Head of caudate nucleus (tissue), 42 donors: ENCODE measurements at regions of chr16 and their contacts with region 1.

Region 1: GRCh38 chr16:2429034-2429770 is at the start of gene CCNF:
- DNase-seq: peak; percentile 94 to 99 (median 98)

Region 2: GRCh38 chr16:2224183-2224486 is 205.1 kb before region 1 on chr16:
- intact Hi-C with region 1: no loop called
- DNase-seq: peak in 1 of 42 donors; percentile 42

Region 3: DNA sequence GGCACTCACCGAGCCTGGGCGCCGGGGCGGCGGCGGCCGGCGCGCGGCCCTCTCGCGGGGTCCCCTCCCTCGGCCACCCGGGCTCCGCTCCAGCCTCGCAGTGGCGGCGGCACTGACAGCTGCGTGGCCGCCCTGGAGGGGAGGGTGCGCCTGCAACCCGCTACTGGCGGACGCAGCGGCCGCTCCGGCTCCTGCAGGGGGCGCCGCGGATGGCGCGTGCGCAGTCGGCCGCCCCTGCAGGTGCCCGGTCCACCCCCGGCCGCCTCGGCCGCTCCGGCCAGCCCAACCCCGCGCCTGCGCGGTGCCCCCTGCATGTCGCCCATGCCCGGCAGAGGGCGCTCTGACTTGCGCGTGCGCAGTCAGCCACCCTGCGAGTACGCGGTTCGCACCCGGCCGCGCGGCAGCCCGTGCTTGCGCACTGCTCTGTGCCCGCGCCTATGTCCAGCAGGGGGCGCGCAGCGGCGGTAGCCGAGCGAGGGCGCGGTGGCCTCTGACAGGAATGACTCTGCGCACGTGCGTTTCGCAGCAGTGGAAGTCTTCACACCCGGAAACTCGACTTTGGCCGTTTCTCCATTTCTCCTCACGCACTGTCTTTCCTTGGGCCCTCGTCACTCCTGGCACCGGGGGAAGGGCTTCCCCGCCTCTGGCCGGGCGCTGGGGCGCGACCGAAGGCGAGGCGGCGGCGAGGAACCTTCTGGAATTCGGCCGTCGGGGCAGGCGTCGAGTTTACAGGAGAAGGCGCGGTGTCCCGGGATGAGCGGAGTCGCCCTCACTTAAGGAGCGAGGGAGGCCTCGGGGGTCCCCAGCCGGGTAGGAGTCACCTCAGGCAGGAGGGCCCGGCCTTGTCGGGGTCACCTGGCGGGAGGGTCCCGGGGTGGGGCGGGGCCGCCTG is 88.4 kb before region 1 on chr16 and contains the start of gene ABCA3:
- intact Hi-C with region 1: loop called (anchors 5 kb)
- DNase-seq: peak; percentile 77 to 98 (median 93)

Region 4: DNA sequence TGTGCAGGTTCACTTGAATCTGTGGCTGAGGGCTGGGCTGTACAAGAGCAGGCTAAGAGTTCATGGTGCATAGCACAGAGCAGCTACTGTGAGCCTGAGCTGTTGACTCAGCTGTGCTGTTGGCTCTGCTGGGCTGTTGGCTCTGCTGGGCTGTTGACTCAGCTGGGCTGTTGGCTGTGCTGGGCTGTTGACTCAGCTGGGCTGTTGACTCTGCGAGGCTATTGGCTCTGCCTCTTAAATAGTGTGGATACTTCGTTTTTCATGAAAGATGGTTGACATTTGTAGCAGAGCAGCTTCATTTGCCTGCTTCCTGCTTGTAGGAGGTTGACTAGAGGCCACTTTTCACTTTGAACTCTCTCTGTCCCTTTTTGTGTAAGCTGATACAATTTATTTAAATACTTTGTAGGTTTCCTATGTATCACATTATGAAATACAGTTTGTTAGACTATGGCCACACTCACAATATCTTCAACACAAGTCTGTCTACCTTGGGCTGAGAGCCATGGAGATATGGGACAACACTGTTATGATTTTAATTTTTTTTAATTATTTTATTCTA is 40.2 kb before region 1 on chr16:
- intact Hi-C with region 1: no loop called
- DNase-seq: no peak

Region 5: DNA sequence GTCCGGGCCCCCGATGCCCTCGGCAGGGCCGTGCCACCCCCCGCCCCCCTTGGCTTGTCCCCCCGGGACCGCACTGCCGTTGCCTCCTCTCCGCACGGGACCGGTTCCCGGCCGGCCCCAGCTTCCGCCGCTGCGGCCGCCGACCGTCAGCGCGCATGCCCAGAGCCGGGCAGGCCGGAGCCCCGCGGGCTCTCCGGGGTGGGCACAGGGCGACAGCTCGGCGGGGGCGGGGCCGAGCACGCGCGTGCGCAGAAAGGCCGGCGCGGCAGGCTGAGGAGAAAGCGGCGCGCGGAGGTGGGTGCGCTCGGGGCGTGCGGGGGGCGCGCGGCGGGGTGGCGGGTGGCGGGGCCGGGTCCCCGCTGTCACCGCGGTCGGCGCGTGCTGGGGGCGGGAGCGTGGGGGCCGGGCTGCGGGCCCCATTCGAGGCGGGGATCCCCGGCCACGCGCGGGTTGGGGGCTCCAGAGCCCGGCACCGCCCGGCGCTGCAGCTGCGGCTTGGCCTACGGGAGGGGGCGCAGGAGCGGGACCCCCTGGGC is 45.7 kb after region 1 on chr16 and contains the start of gene TBC1D24:
- intact Hi-C with region 1: loop called (anchors 10 kb)
- DNase-seq: peak; percentile 46 to 94 (median 88)

Region 6: DNA sequence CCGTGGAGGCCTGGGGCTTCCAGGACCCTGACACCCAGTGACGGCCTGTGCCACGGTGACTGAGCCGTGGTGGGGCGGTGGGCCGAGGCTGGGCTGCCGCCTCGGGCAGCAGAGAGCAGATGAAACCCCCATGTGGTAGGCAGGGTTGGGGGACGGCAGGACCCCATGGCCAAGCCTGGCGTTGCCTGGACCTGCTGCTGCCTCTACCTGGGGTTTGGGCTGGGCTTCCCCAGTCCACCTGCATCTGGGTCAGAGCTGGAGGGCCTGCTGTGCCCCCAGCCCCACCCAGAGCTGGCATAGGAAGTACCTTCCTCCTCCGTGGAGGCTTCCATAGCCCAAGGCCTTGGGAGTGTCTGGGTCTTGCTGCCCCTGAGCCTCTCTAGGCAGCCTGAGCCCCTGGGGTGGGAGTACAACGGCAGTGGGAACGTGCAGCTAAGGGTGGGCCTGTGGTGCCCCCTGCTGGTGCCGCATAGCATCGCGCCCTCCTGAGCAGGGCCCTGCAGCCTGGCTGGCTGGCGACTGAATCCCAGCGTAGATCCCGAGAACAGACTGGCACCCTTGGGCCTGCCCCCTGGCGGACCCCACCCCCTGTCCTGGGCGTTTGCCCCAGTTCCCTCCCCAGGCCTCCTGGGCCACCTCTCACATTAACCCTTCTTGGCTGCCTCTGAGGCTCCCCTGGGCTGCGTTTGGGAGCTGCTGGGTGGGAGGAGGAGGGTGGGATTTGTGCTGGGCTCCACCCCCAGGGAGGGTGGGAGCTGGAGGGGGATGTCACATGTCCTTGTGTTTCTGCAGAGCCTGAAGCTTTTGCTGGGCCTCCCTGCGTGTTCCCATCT is 71.9 kb after region 1 on chr16:
- intact Hi-C with region 1: loop called (anchors 10 kb)
- DNase-seq: peak; percentile 83 to 96 (median 91)